ENCODE measurements at regions of chr6 and their contacts with region 1.

Region 1: DNA sequence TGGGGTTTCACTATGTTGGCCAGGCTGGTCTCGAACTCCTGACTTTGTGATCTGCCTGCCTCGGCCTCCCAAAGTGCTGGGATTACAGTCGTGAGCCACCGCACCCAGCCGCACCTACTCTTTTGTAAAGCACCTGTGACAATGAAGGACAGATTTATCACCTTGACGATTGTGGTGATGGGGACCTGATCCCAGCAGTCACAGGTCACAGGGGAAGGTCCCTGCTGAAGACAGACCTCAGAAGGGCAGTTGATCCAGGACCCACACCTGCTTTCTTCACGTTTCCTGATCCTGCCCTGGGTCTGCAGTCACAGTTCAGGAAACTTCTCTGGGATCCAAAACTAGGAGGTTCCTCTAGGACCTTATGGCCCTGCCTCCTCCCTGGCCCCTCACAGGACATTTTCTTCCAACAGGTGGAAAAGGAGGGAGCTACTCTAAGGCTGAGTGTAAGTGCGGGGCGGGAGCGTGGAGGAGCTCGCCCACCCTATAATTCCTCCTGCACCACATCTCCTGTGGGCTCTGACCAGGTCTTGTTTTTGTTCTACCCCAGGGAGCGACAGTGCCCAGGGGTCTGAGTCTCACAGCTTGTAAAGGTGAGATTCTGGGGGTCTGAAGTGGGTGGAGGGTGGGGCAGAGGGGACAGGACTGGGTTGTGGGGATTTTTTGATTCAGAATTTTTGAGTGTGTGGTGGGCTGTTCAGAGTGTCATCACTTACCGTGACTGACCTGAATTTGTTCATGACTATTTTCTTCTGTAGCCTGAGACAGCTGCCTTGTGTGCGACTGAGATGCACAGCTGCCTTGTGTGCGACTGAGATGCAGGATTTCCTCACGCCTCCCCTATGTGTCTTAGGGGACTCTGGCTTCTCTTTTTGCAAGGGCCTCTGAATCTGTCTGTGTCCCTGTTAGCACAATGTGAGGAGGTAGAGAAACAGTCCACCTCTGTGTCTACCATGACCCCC is 3.0 kb downstream of the HLA-E start:
- DNase-seq: no peak

Region 2: DNA sequence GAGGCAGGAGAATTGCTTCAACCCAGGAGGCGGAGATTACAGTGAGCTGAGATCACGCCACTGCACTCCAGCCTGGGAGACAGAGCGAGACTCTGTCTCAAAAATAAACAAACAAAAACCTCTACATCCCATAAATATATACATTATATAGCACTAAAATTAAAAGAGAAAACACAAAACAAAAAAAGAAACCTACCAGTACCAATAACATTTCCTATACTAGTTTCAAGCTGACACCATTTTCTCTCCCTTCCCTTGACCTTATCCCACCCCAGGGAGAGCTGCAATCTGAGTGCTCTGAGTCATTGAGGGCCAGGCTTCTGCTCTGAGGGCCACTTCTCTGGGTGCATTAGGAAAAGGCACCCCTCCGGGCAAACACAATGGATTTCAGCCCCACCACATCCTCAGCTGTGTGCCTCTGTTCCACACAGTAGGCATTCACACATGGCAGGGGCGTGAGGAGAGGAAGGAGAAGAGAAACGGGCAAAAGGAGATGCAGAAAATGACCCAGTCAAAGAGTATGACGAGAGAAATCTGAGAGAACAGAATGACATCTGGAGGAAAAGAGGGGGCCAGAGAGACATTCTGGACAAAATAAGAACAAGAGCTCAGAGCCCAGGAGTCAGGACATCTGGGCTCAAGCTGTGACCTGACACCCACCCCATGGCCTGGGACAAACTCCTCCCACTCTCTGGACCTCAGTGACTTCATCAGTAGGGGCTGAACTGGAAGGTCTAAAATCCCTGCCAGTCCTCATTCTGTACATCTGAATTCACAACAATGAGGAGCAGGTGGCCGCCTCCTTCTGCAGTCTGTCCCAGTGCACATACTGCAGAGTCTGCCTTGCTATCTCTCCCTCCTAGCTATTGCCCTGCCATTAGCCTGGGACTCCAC is 297.2 kb before region 1 on chr6:
- intact Hi-C with region 1: no loop called
- DNase-seq: no peak

Region 3: DNA sequence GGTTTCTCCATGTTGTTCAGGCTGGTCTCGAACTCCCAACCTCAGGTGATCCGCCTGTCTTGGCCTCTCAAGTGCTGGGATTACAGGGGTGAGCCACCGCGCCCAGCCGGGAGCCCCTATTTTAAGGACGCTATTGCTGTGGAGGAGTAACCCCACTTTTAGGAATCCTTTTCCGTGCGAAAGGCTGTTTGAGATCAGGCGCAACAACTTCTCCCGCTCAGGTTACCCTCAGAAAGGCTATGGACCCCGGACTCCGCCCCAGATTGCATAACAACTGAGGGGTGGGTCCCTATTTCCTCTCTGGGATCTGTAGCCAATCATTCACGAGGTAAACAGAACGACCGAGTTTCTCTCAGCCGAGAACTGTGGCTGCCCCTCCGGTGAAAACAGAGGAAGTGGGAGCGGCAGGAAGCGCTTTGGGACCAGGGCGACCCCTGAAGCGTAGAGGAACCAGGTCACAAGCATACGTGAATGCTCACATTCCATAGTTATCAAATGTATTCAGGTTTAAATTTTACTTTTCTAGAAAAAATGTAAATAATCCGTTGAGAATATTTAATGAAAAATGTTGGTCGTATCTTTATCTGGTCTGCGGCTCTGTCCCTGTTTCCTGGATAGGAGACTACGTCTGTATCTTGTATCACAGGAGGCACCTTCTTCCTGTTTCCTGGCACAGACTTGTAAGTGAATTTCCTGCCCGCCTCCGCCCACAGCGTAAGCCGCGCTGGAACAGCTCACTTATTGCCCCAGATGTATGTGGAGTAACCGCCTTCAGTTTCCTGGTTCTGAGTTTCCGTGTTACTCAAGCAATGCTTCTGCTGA is 23.9 kb after region 1 on chr6:
- intact Hi-C with region 1: loop called in 1 of 2 experiments (anchors 1 kb)
- DNase-seq: peak; percentile 96

Region 4: DNA sequence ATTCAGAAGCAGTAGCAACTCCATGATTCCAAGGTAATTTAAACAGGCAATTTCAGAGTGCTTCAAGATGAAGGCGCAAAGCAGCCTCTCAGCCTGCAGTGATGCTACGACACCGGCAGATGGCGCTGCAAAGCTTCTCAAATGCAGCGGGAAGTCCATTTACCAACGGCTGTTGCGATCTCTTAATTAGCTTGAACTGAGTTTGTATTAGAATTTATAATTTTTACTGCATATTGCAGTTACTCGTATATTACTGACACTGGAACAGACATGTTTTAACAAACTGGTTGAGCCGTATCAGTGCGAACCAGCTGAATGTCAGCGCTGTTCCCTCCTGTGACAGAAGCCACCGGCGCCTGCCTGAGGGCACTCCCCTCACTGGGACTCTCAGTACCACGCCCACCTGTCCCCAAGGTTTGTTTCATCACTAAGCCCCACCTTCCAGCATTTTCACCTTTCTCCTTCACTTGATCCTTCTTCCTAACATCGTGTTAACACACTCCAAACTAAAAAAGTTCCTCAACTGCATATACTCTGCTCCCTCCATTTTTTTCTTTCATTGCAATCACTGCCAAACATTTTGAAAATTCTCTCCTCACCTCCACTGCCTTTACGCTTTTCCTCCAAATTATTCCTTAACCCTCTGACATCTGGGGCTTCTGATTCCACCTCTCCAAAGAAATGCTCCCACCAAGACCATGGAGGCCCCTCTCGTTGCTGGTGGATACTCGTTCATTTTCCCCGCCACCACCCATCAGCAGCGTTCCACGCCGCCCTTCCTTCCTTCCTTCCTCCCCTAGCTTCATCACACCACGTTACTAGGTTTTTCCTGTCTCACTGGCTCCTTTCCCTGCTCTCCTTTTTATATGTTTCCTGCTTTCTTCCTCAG is 49.5 kb after region 1 on chr6:
- intact Hi-C with region 1: no loop called
- DNase-seq: peak; percentile 86